ENCODE measurements at regions of chr3 and their contacts with region 1.

Region 1: GRCh38 chr3:142124243-142124642 is 25.1 kb downstream of the TFDP2 start:
- DNase-seq: no peak
- H3K4me3 ChIP-seq: no peak overlapping the region
- H3K27ac ChIP-seq: no peak overlapping the region
- H3K4me1 ChIP-seq: no peaks in the 10 kb centered on the region
- H3K27me3 ChIP-seq: no peaks in the 10 kb centered on the region
- CTCF ChIP-seq: no peak
- POLR2A ChIP-seq: no peak

Region 2: GRCh38 chr3:141764986-141765385 is 359.3 kb before region 1 on chr3:
- CTCF ChIA-PET with region 1: no interaction called
- POLR2A ChIA-PET with region 1: no interaction called
- dilution Hi-C with region 1: no loop called
- intact Hi-C with region 1: no loop called
- DNase-seq: no peak
- H3K4me3 ChIP-seq: no peak overlapping the region
- H3K27ac ChIP-seq: no peak overlapping the region
- H3K4me1 ChIP-seq: peaks cover 3% of the 10 kb centered on the region
- H3K27me3 ChIP-seq: peaks cover 0 to 4% of the 10 kb centered on the region in 2 experiments
- CTCF ChIP-seq: no peak
- POLR2A ChIP-seq: no peak

Region 3: DNA sequence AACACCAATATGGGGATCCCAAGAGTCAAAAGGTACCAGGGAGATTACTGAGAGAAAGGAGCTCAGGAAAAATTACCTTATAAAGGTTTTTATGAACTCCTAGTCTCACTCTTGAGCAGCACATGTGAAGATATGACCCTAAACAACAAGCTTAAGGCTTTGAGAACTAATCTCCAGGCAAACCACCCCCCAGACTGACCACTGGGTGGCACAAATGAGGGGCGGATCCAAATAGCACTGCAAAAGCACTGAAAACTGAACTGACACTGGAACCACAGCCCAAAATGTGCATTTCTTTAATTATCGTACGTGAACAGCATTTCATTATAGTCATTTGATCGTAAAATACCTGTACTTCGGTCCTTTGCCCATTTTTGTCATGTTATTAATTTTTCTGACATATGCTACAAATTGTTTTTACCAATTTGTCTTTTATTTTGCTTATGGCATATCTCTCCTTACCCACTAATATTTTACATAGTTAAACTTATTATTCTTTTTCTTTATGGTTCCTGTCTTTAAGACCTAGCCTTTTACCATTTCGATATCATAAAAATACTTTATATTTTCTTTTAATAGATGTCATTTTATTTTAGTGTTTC is 56.6 kb after region 1 on chr3:
- CTCF ChIA-PET with region 1: interaction called, 20 read pairs
- POLR2A ChIA-PET with region 1: no interaction called
- dilution Hi-C with region 1: no loop called
- intact Hi-C with region 1: no loop called
- DNase-seq: peak; percentile 51
- H3K4me3 ChIP-seq: no peak overlapping the region
- H3K27ac ChIP-seq: no peak overlapping the region
- H3K4me1 ChIP-seq: no peaks in the 10 kb centered on the region
- H3K27me3 ChIP-seq: no peaks in the 10 kb centered on the region
- CTCF ChIP-seq: peak; percentile 54 to 64
- POLR2A ChIP-seq: no peak

Region 4: DNA sequence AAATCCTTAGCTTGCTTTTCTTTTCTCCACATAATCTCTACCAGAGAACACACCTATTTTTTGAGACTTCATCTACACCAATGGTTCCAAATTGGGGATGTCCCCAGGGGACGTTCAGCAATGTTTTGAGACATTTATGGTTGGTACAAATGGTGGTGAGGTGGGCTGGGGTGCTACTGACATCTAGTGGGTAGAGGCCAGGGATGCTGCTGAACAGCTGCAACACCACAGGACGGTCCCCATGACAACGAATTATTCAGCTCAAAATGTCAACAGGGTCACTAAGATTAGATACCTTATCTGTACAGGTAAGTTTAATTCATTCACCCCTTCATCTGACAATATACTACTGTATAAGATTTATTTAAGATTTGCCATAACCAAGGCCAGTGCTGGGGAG is 86.8 kb after region 1 on chr3:
- CTCF ChIA-PET with region 1: interaction called, 30 read pairs
- POLR2A ChIA-PET with region 1: no interaction called
- dilution Hi-C with region 1: no loop called
- intact Hi-C with region 1: loop called (anchors 2 kb)
- DNase-seq: peak; percentile 26
- H3K4me3 ChIP-seq: no peak overlapping the region
- H3K27ac ChIP-seq: no peak overlapping the region
- H3K4me1 ChIP-seq: peaks cover 9% of the 10 kb centered on the region
- H3K27me3 ChIP-seq: no peaks in the 10 kb centered on the region
- CTCF ChIP-seq: peak in 1 of 2 donors; percentile 31
- POLR2A ChIP-seq: no peak

Region 5: DNA sequence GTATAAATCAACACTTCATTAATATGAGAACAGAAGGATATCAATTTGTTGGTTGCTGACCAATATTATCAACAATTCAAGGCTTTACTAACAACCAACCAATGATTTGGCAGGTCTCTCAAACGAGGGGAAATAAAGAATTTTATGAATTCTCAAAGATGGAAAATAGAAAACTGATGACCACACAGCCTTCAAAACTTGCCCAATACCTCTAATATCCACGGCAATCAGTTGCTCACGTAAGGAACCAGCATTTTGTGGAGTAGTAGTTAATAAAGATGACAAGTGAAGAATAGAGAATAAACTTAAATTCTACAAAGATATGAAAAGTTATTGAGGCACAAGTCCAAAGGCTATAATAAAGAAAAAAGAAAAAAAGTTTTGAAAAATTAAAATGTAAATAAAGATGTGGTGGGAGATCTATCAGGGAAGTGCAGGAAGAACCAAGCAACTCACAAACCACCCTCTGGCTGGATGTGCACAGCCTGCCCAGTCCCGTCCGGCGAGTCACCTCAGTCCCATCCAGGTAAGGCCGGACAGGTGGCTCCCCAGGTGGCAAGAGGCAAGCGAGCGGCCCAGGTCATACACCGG is 100.3 kb after region 1 on chr3:
- CTCF ChIA-PET with region 1: interaction called, 13 read pairs
- POLR2A ChIA-PET with region 1: no interaction called
- dilution Hi-C with region 1: no loop called
- intact Hi-C with region 1: no loop called
- DNase-seq: no peak
- H3K4me3 ChIP-seq: peak overlapping the region; percentile 64 to 74 (median 72)
- H3K27ac ChIP-seq: peak overlapping the region; percentile 69
- H3K4me1 ChIP-seq: peaks cover 6% of the 10 kb centered on the region
- H3K27me3 ChIP-seq: no peaks in the 10 kb centered on the region
- CTCF ChIP-seq: no peak
- POLR2A ChIP-seq: no peak

Region 6: GRCh38 chr3:142270407-142270806 is 146.2 kb after region 1 on chr3:
- CTCF ChIA-PET with region 1: interaction called, 18 read pairs
- POLR2A ChIA-PET with region 1: no interaction called
- dilution Hi-C with region 1: no loop called
- intact Hi-C with region 1: no loop called
- DNase-seq: no peak
- H3K4me3 ChIP-seq: no peak overlapping the region
- H3K27ac ChIP-seq: no peak overlapping the region
- H3K4me1 ChIP-seq: no peaks in the 10 kb centered on the region
- H3K27me3 ChIP-seq: peaks cover under 1 to 9% of the 10 kb centered on the region in 2 experiments
- CTCF ChIP-seq: no peak
- POLR2A ChIP-seq: no peak

Region 7: GRCh38 chr3:142279965-142280590 is 155.8 kb after region 1 on chr3:
- CTCF ChIA-PET with region 1: interaction called, 225 read pairs
- POLR2A ChIA-PET with region 1: interaction called, 3 read pairs
- dilution Hi-C with region 1: no loop called
- intact Hi-C with region 1: loop called (anchors 1 kb)
- DNase-seq: peak; percentile 66
- H3K4me3 ChIP-seq: no peak overlapping the region
- H3K27ac ChIP-seq: no peak overlapping the region
- H3K4me1 ChIP-seq: no peaks in the 10 kb centered on the region
- H3K27me3 ChIP-seq: peaks cover 0 to 2% of the 10 kb centered on the region in 2 experiments
- CTCF ChIP-seq: peak; percentile 43 to 49
- POLR2A ChIP-seq: no peak